Activated naive CD4-positive, alpha-beta T cell treated with anti-CD3 and anti-CD28 coated beads for 36 hours (primary cell): ENCODE measurements at regions of chrX and their contacts with region 1.

Region 1: GRCh38 chrX:118603981-118604380 is 108.4 kb downstream of the DOCK11 start:
- DNase-seq: peak; percentile 50
- H3K4me3 Mint-ChIP-seq: no peak overlapping the region
- H3K27ac Mint-ChIP-seq: peak overlapping the region; percentile 28
- H3K4me1 Mint-ChIP-seq: peaks cover 21% of the 10 kb centered on the region
- H3K27me3 Mint-ChIP-seq: no peaks in the 10 kb centered on the region

Region 2: GRCh38 chrX:117510453-117510852 is 1093.5 kb before region 1 on chrX:
- CTCF ChIA-PET with region 1: no interaction called
- intact Hi-C with region 1: no loop called
- DNase-seq: no peak
- H3K4me3 Mint-ChIP-seq: no peak overlapping the region
- H3K27ac Mint-ChIP-seq: no peak overlapping the region
- H3K4me1 Mint-ChIP-seq: no peaks in the 10 kb centered on the region
- H3K27me3 Mint-ChIP-seq: no peaks in the 10 kb centered on the region

Region 3: DNA sequence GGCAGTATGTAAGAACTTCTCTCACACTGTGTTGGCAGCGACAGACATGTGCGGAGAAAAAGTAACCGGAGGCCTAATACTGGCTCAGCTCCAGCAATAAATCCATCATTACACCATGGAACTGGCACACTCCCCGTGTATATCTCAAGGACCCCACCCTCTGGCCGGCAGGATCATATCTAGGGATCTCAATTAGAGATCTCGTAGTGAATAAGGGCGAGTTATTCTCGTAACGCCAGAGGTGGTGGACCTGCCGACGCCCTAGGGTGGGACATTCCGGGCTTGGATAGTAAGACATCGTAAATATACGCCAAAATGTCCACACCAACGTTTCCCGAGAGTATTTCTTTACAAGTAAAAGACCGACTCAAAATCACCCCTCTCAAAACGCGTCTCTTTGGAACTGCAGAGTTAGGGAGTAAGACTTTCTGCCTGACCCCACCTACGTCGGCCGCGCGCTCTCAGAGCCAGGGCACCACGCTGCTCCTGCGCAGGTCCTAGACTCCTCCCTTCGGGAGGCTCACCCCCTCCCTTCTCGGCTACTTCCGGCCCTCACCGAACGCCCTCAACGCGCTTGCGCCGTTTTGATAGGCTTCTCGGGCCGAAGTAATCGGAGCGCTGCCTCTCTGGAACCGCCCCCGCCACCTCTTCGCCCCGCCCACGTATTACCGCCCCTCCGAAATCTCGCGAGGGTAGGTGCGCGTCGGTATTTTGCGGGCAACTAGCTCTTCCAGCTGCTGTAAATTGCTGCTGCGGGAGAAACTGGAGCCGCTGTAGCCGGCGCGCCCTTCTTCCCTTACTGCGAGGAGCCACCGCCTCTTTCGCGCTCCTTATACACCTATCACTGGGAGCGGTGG is 258.4 kb before region 1 on chrX and contains the start of gene WDR44:
- CTCF ChIA-PET with region 1: interaction called, 5 read pairs
- intact Hi-C with region 1: loop called (anchors 1 kb)
- DNase-seq: peak; percentile 94
- H3K4me3 Mint-ChIP-seq: peak within 1 kb of the TSS; percentile 97
- H3K27ac Mint-ChIP-seq: peak within 1 kb of the TSS; percentile 95
- H3K4me1 Mint-ChIP-seq: peaks cover 30% of the 10 kb centered on the region
- H3K27me3 Mint-ChIP-seq: no peaks in the 10 kb centered on the region
- total RNA-seq, gene WDR44: 4.0 to 5.4 TPM

Region 4: DNA sequence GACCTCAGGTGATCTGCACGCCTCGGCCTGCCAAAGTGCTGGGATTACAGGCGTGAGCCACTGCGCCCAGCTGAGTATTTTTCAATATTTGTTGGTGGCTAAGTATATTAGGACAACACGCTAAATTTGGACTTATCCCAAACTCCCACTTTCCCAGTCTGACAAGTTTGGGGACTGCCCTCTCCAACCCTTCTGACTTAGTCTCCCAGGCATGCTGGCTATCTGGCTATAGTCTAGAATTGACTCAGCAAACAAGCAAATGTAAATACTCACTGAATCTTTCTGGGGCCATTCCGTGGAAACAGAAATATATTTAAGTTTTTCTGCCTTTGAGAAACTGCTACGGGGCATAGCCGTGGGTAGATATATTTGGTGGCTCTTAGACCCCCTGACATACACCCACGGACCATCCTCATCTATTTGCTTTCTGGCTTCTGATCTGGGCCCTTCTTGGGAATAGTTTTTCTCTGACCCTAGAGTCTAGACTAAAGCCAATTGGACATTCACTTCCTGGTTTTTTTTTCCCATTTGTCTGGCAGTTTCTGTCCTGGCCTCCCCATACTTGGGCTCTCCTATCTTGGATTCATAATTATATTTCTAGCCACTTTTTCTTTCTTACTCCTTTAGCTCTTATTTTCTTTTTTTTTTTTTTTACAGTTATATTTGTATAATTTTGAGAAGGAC is 119.6 kb before region 1 on chrX:
- CTCF ChIA-PET with region 1: interaction called, 3 read pairs
- intact Hi-C with region 1: loop called (anchors 1 kb)
- DNase-seq: no peak
- H3K4me3 Mint-ChIP-seq: no peak overlapping the region
- H3K27ac Mint-ChIP-seq: no peak overlapping the region
- H3K4me1 Mint-ChIP-seq: no peaks in the 10 kb centered on the region
- H3K27me3 Mint-ChIP-seq: no peaks in the 10 kb centered on the region

Region 5: DNA sequence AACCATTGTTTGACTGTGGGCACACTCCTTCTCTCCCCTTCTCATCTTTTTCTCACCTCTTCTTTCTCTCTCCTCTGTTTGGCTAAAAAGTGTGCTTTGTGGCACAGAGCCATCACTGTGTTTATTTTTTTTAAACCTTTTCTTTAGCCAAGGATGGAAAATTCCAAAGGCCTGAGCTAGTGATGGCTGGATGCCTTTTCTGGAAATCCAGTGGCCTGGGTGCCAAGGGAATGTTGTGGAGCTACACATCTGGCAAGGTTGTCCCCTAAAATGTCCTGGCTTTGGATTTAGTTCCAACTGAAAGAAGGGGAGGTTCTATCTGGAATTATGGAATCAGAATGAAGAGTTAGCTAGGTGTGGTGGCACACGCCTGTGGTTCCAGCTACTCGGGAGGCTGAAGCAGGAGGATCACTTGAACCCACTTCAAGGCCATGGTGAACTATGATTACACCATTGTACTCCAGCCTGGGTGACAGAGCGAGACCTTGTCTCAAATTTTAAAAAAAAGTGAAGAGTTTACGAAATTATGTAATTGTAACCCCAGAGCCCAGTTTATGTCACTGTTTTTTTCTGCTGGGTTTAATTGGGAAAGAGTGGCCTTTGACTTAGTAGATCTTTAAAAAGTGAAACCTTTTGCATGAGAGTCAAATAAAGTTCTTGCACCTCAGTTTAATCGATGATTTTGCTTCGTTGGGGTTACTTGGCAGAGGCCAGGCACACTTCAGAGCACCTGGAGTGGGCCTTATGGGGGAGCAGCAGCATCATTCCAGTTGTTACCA is 90.7 kb before region 1 on chrX:
- CTCF ChIA-PET with region 1: interaction called, 12 read pairs
- intact Hi-C with region 1: no loop called
- DNase-seq: no peak
- H3K4me3 Mint-ChIP-seq: no peak overlapping the region
- H3K27ac Mint-ChIP-seq: peak overlapping the region; percentile 36
- H3K4me1 Mint-ChIP-seq: peaks cover 65% of the 10 kb centered on the region
- H3K27me3 Mint-ChIP-seq: no peaks in the 10 kb centered on the region

Region 6: DNA sequence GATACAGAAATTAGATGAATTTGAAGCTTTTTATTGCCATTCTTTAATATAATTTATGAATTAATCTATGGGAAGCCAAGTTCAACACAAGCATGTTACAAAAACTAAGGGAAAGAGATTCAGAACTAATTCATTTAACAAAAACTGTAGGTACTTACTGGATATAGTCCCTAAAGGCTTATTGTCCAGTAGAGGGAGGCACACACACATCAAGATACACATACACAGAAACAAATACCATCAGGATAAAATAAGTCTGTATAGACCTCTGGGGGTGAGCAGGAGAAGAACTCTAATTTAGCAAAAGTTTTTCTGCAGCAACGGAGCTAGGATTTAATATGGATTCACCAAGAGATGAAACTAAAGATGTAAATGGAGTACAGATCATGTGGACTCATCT is 40.4 kb after region 1 on chrX:
- CTCF ChIA-PET with region 1: no interaction called
- intact Hi-C with region 1: no loop called
- DNase-seq: no peak
- H3K4me3 Mint-ChIP-seq: no peak overlapping the region
- H3K27ac Mint-ChIP-seq: no peak overlapping the region
- H3K4me1 Mint-ChIP-seq: no peaks in the 10 kb centered on the region
- H3K27me3 Mint-ChIP-seq: no peaks in the 10 kb centered on the region

Region 7: GRCh38 chrX:118807151-118808017 is 203.4 kb after region 1 on chrX:
- CTCF ChIA-PET with region 1: interaction called, 8 read pairs
- intact Hi-C with region 1: loop called (anchors 1 kb)
- DNase-seq: peak; percentile 56
- H3K4me3 Mint-ChIP-seq: no peak overlapping the region
- H3K27ac Mint-ChIP-seq: no peak overlapping the region
- H3K4me1 Mint-ChIP-seq: no peaks in the 10 kb centered on the region
- H3K27me3 Mint-ChIP-seq: peaks cover 6% of the 10 kb centered on the region